Activated CD8-positive, alpha-beta T cell treated with anti-CD3 and anti-CD28 coated beads, Interleukin-2, amount 10 ng/mL, durations not matched to agents 7 days and 5 days (primary cell): ENCODE measurements at regions of chr3 and their contacts with region 1.

Region 1: GRCh38 chr3:122245513-122246174 is 62.2 kb downstream of the CASR start:
- DNase-seq: no peak
- ATAC-seq: no peak
- H3K4me3 Mint-ChIP-seq: peak overlapping the region; percentile 64
- H3K27ac Mint-ChIP-seq: peak overlapping the region; percentile 73
- H3K4me1 Mint-ChIP-seq: peaks cover 20% of the 10 kb centered on the region
- H3K27me3 Mint-ChIP-seq: peaks cover 35% of the 10 kb centered on the region

Region 2: GRCh38 chr3:121998030-121998580 is 247.5 kb before region 1 on chr3:
- CTCF ChIA-PET with region 1: no interaction called
- POLR2A ChIA-PET with region 1: no interaction called
- DNase-seq: no peak
- ATAC-seq: no peak
- H3K4me3 Mint-ChIP-seq: no peak overlapping the region
- H3K27ac Mint-ChIP-seq: no peak overlapping the region
- H3K4me1 Mint-ChIP-seq: peaks cover 19% of the 10 kb centered on the region
- H3K27me3 Mint-ChIP-seq: peaks cover 5% of the 10 kb centered on the region

Region 3: DNA sequence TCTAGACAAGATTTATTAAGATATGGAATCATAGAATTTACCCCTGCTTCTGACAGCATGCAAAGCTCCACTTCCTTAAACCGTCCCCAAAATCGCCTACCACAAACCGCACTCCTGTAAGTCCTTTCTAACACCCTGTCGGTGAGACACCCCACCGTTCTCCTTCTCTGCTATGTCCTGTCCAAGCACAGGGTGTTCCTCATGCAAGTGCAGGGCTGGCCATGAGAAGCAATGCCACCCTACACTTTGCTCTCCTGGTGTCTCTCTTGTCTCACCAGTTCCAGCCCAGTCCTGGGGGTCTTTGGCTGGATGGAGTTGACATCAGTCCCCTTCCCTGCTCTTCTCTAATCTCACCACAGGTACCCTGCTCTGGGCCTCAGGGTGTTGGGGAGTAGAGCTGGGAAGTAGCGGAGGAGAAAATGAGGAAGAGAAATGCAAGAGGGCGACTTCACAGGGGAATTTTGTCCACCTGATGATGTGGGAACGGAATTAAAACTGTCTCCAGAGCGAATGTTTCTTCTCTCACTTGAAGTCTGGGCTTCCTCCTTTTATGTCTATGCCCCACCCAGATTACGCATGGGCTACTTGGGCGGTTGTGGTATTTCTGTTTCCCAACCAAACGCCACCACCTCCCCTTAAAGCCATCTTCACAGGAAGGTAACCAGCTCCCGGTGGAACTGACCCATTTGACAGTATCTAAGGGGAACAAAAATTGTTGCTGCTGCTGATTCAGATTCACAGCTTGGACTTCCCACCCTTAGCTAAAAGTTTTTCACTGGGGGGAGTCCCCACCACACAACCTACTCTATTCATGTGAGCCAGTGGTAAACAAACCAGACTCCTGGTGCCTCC is 12.3 kb before region 1 on chr3:
- CTCF ChIA-PET with region 1: interaction called, 10 read pairs
- POLR2A ChIA-PET with region 1: no interaction called
- DNase-seq: peak; percentile 34
- ATAC-seq: peak; percentile 63
- H3K4me3 Mint-ChIP-seq: peak overlapping the region; percentile 5
- H3K27ac Mint-ChIP-seq: no peak overlapping the region
- H3K4me1 Mint-ChIP-seq: peaks cover 17% of the 10 kb centered on the region
- H3K27me3 Mint-ChIP-seq: peaks cover 11% of the 10 kb centered on the region